ENCODE measurements at regions of chr7 and their contacts with region 1.

Region 1: GRCh38 chr7:80134536-80135320 is at the start of gene GNAI1:
- DNase-seq: peak; percentile 51
- ATAC-seq: peak; percentile 31
- H3K4me3 Mint-ChIP-seq: peak within 1 kb of the TSS; percentile 68
- H3K27ac Mint-ChIP-seq: peak within 1 kb of the TSS; percentile 85
- H3K4me1 Mint-ChIP-seq: peaks cover 35% of the 10 kb centered on the region
- H3K27me3 Mint-ChIP-seq: peaks cover 44% of the 10 kb centered on the region
- total RNA-seq, gene GNAI1: 3.6 to 4.1 TPM

Region 2: DNA sequence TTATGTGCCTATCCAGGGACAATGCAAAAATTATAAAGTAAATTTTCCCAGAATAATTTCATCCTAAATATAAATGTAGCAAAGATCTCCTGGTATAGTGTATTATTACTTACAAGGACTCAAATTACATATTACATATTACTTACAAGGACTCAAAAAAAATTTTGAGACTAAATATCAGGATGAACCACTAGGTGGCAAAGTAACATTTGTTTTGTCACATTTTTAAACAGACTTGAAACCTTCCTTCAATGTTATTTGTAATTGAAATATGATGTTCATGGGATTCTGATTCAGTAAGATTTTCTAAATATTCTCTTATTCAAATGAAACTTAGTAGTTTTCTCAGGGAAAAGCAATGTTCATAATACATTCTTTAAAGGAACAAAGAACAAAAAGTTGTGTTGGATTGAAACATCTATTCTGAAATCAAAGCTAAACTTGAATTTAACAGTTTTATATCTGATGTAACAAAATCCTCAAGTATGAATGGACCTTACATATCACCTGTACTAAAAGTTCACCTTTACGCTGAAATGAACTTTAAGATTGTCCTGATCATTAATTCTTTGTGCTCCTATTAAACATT is 74.4 kb before region 1 on chr7:
- CTCF ChIA-PET with region 1: no interaction called
- POLR2A ChIA-PET with region 1: no interaction called
- intact Hi-C with region 1: loop called in 1 of 2 experiments (anchors 5 kb)
- DNase-seq: no peak
- ATAC-seq: no peak
- H3K4me3 Mint-ChIP-seq: no peak overlapping the region
- H3K27ac Mint-ChIP-seq: no peak overlapping the region
- H3K4me1 Mint-ChIP-seq: no peaks in the 10 kb centered on the region
- H3K27me3 Mint-ChIP-seq: no peaks in the 10 kb centered on the region

Region 3: DNA sequence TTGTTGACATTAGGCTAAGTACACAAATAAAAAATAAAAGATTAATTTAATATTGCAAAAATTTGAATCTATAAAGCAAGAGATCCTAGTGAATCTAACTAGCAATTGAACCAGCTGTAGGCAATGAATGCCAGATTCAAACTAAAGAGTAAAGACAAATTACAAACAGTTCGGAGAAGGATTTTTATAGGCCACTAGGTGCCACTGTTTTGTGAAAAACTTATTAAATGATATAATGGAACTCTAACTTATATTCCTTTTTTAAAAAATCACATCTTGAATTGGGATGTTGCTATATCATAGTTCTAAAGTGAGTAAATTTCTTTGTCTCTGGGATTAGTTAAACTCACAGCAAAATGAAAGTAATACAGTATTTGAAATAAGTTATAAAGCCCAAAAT is 39.2 kb before region 1 on chr7:
- CTCF ChIA-PET with region 1: no interaction called
- POLR2A ChIA-PET with region 1: no interaction called
- intact Hi-C with region 1: no loop called
- DNase-seq: no peak
- ATAC-seq: no peak
- H3K4me3 Mint-ChIP-seq: no peak overlapping the region
- H3K27ac Mint-ChIP-seq: no peak overlapping the region
- H3K4me1 Mint-ChIP-seq: no peaks in the 10 kb centered on the region
- H3K27me3 Mint-ChIP-seq: no peaks in the 10 kb centered on the region

Region 4: DNA sequence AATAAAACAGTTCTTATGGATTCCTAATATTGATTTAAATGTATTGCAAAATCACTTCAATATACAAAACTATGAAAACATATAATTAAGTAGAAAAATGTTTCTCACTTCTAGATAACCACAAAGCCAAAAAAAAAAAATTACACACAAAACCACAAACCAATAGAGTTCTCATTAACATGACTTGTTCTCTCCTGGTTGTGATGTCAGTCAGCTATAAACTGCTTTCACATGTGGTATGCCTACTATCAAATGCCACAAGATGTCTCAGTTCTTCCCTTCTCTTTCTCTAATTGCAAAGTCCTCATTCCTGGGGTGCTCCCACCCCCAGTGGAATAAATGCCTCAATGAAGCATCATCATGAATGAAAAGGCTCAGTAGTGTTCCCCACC is 16.5 kb after region 1 on chr7:
- CTCF ChIA-PET with region 1: interaction called, 4 read pairs
- POLR2A ChIA-PET with region 1: no interaction called
- intact Hi-C with region 1: loop called (anchors 1 kb)
- DNase-seq: peak; percentile 61
- ATAC-seq: peak; percentile 96
- H3K4me3 Mint-ChIP-seq: no peak overlapping the region
- H3K27ac Mint-ChIP-seq: no peak overlapping the region
- H3K4me1 Mint-ChIP-seq: peaks cover 25% of the 10 kb centered on the region
- H3K27me3 Mint-ChIP-seq: peaks cover 19% of the 10 kb centered on the region

Region 5: DNA sequence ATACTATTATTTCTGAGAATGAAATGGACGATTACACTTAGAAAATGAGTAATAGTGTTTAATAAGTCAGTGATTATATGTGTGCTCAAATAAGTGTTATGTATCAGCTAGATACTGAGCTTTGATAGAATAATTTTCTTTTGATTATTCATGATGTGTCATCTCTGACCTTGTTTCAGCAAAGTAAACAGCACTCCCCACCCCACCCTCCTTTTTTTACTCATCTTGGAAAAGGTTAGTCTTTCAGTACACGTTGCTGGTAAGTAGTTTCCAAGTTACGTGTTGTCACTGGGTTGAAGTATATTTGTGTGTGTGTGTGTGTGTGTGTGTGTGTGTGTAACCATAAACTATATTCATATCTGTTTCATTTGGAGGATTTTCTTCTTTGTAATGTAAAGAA is 84.0 kb after region 1 on chr7:
- CTCF ChIA-PET with region 1: no interaction called
- POLR2A ChIA-PET with region 1: no interaction called
- intact Hi-C with region 1: loop called (anchors 1 to 2 kb)
- DNase-seq: peak; percentile 30
- ATAC-seq: peak; percentile 82
- H3K4me3 Mint-ChIP-seq: no peak overlapping the region
- H3K27ac Mint-ChIP-seq: no peak overlapping the region
- H3K4me1 Mint-ChIP-seq: peaks cover 14% of the 10 kb centered on the region
- H3K27me3 Mint-ChIP-seq: peaks cover 2% of the 10 kb centered on the region

Region 6: DNA sequence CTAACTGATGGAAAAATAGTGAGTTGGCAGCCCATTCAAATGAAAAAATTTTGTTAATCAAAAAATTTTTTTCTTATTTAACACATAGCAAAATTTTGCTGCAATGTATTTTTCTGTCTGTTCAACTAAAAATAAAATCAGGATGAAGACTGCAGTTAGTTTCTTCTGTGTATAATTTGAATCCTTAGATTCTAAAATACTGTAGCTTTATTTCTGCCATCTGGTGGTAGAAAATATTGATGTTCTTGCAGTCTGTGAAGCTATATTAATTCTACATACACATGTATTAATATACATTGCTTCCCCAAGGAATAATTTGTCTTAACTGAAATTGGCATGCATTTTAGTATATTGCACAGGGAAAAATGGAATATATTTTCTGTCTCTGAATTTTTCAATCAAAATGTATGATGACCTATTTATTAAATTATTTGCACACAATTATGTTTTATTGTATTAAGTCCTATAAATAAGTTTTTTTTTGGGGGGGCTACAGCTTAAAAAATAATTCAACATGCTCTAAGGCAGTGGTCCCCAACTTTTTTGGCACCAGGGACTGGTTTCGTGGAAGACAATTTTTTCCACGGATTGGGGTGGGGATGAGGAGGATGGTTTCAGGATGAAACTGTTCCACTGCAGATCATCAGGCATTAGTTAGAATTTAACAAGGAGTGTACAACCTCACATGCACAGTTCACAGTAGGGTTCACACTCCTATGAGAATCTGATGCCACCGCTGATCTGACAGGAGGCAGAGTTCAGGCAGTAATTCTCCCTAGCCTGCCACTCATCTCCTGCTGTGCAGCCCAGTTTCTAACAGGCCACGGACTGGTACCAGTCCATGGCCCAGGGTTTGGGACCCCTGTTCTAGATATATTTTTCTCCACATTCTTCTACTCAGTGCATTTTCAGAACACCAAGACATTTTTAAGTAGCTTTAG is 257.8 kb after region 1 on chr7:
- CTCF ChIA-PET with region 1: interaction called, 5 read pairs
- POLR2A ChIA-PET with region 1: no interaction called
- intact Hi-C with region 1: loop called (anchors 2 kb)
- DNase-seq: no peak
- ATAC-seq: no peak
- H3K4me3 Mint-ChIP-seq: no peak overlapping the region
- H3K27ac Mint-ChIP-seq: no peak overlapping the region
- H3K4me1 Mint-ChIP-seq: no peaks in the 10 kb centered on the region
- H3K27me3 Mint-ChIP-seq: no peaks in the 10 kb centered on the region

Measured in activated CD4-positive, alpha-beta T cell treated with anti-CD3 and anti-CD28 coated beads for 36 hours (primary cell).